ENCODE measurements at regions of chr1 and their contacts with region 1.

Region 1: DNA sequence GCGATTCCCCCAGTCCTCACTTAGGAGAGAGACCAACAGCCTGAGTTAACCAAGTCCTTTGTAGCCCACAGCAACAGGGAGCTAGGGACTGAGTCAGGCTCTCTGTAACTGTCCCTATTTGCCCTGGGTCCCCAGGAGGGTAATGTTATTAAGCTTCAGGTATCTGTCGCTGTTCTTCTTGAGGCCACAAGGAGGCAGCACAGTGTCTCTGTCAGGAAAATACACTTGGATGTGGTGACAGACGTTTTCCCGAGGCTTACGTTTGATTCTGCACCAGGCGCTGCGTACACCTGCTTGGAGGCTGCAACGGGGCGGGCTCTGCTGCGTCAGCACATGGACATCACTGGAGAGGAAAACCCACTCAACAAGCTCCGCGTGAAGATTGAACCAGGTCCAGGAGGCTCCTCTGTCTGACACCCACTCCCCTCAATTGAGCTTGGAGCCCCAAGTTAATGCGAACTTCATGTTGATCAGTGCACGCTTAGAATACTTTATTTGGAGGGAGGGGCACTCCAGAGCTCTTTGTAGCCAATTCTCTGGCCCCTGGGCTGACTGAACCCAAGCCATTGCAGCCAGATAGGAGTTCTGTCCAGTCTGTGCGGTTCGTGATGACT is 10.7 kb upstream of the ELF3 start:
- DNase-seq: peak; percentile 76 to 81 (median 78)
- ATAC-seq: peak; percentile 93
- H3K4me3 ChIP-seq: no peak overlapping the region
- H3K27ac ChIP-seq: no peak overlapping the region
- H3K4me1 ChIP-seq: no peaks in the 10 kb centered on the region; a peak in 1 of 5 replicates
- H3K27me3 ChIP-seq: no peaks in the 10 kb centered on the region
- CTCF ChIP-seq: peak; percentile 91 to 93 (median 93)
- EP300 ChIP-seq: no peak
- POLR2A ChIP-seq: no peak
- RAD21 ChIP-seq: peak; percentile 73 to 86

Region 2: GRCh38 chr1:202135221-202135721 is 135.5 kb after region 1 on chr1:
- CTCF ChIA-PET with region 1: interaction called, 32 read pairs
- POLR2A ChIA-PET with region 1: interaction called, 6 read pairs
- in situ Hi-C with region 1: no loop called
- intact Hi-C with region 1: no loop called
- DNase-seq: peak; percentile 84 to 92 (median 90)
- ATAC-seq: peak; percentile 95
- H3K4me3 ChIP-seq: no peak overlapping the region
- H3K27ac ChIP-seq: no peak overlapping the region
- H3K4me1 ChIP-seq: peaks cover 0 to 17% of the 10 kb centered on the region in 2 experiments; a peak in 2 of 5 replicates
- H3K27me3 ChIP-seq: no peaks in the 10 kb centered on the region
- CTCF ChIP-seq: peak; percentile 83 to 95 (median 86)
- EP300 ChIP-seq: no peak
- POLR2A ChIP-seq: no peak
- RAD21 ChIP-seq: peak; percentile 65 to 70

Region 3: DNA sequence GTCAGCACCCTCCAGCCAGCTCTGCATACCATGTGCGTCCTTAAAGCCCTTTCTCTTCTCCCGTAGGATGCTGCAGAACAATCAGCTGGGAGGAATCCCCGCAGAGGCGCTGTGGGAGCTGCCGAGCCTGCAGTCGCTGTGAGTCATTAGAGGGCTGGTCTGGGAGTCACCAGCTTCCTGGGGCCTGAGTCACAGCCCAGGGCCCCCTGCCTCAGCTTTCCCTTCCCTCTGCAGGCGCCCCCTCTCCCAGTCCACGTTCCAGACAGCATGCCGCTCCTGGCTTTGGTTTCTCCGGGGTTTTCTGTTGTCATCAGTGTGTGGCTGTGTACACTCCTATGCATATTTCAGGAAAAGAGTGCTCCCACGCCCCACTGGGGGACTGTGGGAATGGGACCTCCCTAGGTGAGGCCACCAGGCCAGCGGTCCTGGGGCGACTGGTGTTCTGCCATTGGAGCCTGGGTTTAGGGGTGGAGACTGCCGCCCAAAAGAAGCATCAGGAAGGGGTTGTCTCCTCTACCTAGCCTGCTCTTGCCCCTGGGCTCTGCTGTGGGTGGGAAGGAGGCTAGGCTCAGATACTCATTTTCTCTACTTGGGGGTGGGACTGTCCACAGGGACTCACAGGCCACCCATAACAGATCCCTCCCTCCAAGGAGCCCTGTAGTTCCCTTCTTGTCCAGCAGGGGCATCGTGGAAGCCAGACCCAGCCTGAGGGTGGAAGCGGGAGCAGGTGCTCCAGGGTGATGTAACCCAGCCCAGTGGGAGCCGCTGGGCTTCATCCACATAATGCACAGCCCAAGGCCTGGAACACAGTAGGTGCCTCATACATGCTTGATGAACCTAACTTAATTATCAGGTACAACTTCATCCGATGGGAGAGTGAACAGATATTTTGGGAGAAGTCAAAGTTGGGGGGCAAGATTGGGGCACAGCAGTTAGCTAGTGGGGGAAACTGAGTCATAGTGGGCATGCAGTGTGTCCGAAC is 236.4 kb after region 1 on chr1:
- CTCF ChIA-PET with region 1: no interaction called
- POLR2A ChIA-PET with region 1: no interaction called
- in situ Hi-C with region 1: no loop called
- intact Hi-C with region 1: no loop called
- DNase-seq: peak; percentile 89 to 97 (median 94)
- ATAC-seq: peak; percentile 95
- H3K4me3 ChIP-seq: no peak overlapping the region
- H3K27ac ChIP-seq: no peak overlapping the region
- H3K4me1 ChIP-seq: peaks cover 9 to 10% of the 10 kb centered on the region in 2 experiments; a peak in 4 of 5 replicates
- H3K27me3 ChIP-seq: peaks cover 11 to 57% of the 10 kb centered on the region in 2 experiments; a peak in 4 of 5 replicates
- CTCF ChIP-seq: peak; percentile 90 to 99 (median 92)
- EP300 ChIP-seq: 0 out of 2 replicates have a peak, but pooled peaks have one; percentile 20
- POLR2A ChIP-seq: no peak
- RAD21 ChIP-seq: peak in 1 of 2 experiments; percentile 45; a peak in 2 of 4 replicates